Activated naive CD4-positive, alpha-beta T cell treated with anti-CD3 and anti-CD28 coated beads for 36 hours (primary cell): ENCODE measurements at regions of chr3 and their contacts with region 1.

Region 1: GRCh38 chr3:10115326-10116137 is at the start of gene BRK1:
- DNase-seq: peak; percentile 97
- H3K4me3 Mint-ChIP-seq: peak within 1 kb of the TSS; percentile 92
- H3K27ac Mint-ChIP-seq: peak within 1 kb of the TSS; percentile 94
- H3K4me1 Mint-ChIP-seq: peaks cover 31% of the 10 kb centered on the region
- H3K27me3 Mint-ChIP-seq: no peaks in the 10 kb centered on the region
- total RNA-seq, gene BRK1: 73.6 to 73.7 TPM

Region 2: GRCh38 chr3:9088441-9089353 is 1026.8 kb before region 1 on chr3:
- CTCF ChIA-PET with region 1: no interaction called
- intact Hi-C with region 1: no loop called
- DNase-seq: no peak
- H3K4me3 Mint-ChIP-seq: no peak overlapping the region
- H3K27ac Mint-ChIP-seq: no peak overlapping the region
- H3K4me1 Mint-ChIP-seq: no peaks in the 10 kb centered on the region
- H3K27me3 Mint-ChIP-seq: no peaks in the 10 kb centered on the region

Region 3: DNA sequence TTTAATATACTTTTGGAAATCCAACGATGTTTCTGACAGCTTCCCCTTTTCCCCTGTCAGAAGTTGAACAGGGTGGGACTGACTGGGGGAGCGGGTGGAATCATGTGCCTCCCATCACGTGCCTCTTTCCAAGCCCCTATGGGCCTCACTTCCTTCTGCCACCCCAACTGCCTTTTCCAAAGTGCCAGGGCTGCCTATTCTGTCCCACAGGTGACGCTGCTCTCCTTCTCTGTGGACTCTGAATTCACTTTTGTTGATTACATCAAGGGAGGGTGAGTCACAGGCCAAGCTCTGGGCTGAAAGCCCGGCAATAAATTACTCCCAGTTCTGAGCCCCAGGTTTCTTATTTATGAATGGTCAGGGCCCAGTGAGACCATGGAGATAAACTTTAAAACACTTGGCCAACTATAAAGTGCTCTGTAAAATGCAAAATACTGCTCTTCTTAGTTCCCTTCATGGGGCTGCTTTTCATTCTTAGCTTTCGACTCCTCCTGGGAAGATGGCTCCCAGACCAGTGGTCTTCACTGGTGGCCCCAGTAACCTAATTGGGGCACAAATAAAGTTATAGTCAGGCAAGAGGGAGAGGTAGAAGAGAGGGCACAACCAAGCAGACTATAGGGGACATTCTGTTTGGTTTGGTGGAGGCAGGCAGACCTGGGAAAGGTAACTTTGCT is 399.6 kb before region 1 on chr3:
- CTCF ChIA-PET with region 1: no interaction called
- intact Hi-C with region 1: loop called (anchors 5 kb)
- DNase-seq: peak; percentile 76
- H3K4me3 Mint-ChIP-seq: no peak overlapping the region
- H3K27ac Mint-ChIP-seq: no peak overlapping the region
- H3K4me1 Mint-ChIP-seq: peaks cover 15% of the 10 kb centered on the region
- H3K27me3 Mint-ChIP-seq: no peaks in the 10 kb centered on the region

Region 4: DNA sequence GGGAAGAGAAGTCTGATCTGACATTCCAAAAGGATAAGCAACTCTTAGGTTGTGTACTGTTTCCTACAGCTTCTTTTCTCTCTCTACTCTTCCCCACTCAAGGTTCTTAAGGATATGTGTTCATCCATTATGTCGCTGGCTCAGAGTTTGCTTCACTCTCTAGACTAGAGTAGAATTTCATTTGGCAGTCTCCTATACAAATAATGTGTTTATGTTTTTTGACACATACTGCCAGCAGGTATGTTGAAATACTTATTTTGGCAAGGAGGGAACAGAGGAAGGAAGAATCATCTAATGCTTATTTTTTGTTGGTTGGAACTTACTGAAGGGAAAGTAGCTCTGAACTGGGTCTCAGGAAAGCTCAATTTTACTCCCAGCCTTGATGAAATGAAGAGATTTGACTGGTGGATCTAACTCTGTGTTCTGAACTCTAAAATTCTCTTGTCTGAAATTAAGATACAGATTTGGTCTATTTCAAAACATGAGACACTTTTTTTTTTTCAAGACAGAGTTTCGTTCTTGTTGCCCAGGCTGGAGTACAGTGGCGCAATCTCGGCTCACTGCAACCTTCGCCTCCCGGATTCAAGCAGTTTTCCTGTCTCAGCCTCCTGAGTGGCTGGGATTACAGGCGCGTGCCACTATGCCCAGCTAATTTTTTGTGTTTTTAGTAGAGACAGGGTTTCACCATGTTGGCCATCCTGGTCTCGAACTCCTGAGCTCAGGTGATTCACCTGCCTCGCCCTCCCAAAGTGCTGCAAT is 121.3 kb before region 1 on chr3:
- CTCF ChIA-PET with region 1: no interaction called
- intact Hi-C with region 1: no loop called
- DNase-seq: no peak
- H3K4me3 Mint-ChIP-seq: no peak overlapping the region
- H3K27ac Mint-ChIP-seq: no peak overlapping the region
- H3K4me1 Mint-ChIP-seq: peaks cover 10% of the 10 kb centered on the region
- H3K27me3 Mint-ChIP-seq: no peaks in the 10 kb centered on the region

Region 5: GRCh38 chr3:10081871-10082270 is 33.7 kb before region 1 on chr3:
- CTCF ChIA-PET with region 1: no interaction called
- intact Hi-C with region 1: no loop called
- DNase-seq: no peak
- H3K4me3 Mint-ChIP-seq: no peak overlapping the region
- H3K27ac Mint-ChIP-seq: no peak overlapping the region
- H3K4me1 Mint-ChIP-seq: no peaks in the 10 kb centered on the region
- H3K27me3 Mint-ChIP-seq: no peaks in the 10 kb centered on the region

Region 6: GRCh38 chr3:10142707-10143566 is 27.4 kb after region 1 on chr3:
- CTCF ChIA-PET with region 1: interaction called, 3 read pairs
- intact Hi-C with region 1: loop called (anchors 1 kb)
- DNase-seq: peak; percentile 48
- H3K4me3 Mint-ChIP-seq: peak overlapping the region; percentile 84
- H3K27ac Mint-ChIP-seq: peak overlapping the region; percentile 87
- H3K4me1 Mint-ChIP-seq: peaks cover 32% of the 10 kb centered on the region
- H3K27me3 Mint-ChIP-seq: no peaks in the 10 kb centered on the region

Region 7: GRCh38 chr3:10192953-10193691 is 77.6 kb after region 1 on chr3:
- CTCF ChIA-PET with region 1: no interaction called
- intact Hi-C with region 1: loop called (anchors 1 kb)
- DNase-seq: peak; percentile 93
- H3K4me3 Mint-ChIP-seq: peak overlapping the region; percentile 42
- H3K27ac Mint-ChIP-seq: peak overlapping the region; percentile 96
- H3K4me1 Mint-ChIP-seq: peaks cover 85% of the 10 kb centered on the region
- H3K27me3 Mint-ChIP-seq: no peaks in the 10 kb centered on the region

Region 8: DNA sequence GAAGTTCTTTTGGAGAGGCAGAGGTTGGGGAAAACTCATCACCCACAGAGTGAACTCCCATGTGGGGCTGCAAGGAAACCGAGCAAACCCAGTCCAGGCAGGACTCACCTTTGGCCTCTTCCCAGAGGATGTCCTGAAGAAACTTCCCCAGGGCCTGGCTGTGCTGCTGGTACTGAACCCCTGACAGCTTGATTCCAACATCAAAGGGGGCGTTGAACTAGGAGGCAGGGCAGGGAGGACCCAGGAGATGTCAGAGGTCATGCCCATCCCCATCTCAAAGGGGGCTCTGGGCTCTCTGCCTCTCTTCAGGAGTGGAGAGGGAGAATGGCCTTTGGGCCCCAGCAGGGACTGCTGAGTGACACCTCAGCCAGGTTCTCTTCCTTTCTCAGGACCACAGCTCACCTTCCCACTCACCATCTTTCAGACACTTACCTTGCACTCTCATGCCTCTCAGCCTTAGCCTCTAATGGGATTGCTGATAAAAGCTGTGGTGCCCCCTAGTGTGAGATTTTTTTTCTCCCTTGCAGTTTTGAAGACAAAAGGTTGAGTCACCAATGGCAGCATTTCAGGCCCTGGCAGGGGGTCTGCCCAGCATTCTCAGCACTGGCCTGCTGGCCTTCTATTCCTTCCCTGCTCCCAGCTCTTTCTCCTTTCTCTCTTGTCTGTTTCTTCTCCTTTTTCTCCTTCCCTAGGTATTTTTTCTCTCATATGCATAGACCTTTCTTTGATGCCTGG is 171.2 kb after region 1 on chr3:
- CTCF ChIA-PET with region 1: interaction called, 4 read pairs
- intact Hi-C with region 1: loop called (anchors 5 kb)
- DNase-seq: peak; percentile 67
- H3K4me3 Mint-ChIP-seq: no peak overlapping the region
- H3K27ac Mint-ChIP-seq: no peak overlapping the region
- H3K4me1 Mint-ChIP-seq: peaks cover 41% of the 10 kb centered on the region
- H3K27me3 Mint-ChIP-seq: no peaks in the 10 kb centered on the region